CD14-positive monocyte (primary cell): ENCODE measurements at regions of chr14 and their contacts with region 1.

Region 1: DNA sequence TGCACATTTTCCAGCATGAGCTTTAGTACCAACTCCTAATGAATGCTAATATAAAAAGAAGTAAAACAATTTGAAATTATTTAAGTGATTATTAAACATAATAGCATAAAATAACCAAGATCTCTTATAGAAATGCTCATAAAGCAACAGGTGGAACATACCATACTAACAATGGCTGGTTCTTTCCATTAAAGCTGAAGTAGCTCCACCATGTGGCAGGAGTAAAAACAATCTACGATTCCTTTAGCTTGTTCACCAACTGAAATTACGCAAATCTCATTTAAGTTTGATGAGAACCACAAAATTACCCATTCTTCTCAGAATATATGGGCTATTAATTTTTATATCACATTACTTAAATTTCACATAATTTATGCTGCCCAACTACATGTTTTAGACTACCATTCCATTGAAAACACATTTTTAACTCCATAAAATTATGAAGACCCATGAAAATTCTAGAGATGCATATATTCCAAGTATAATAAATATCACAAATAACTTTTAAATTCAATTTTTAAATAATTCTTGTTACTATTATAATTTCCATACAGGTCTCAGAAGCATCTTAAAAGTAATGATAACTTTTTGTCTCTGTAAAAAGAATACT is 213.6 kb downstream of the DAD1 start:
- DNase-seq: peak in 2 of 3 donors; percentile 12 to 14
- H3K4me3 ChIP-seq: no peak overlapping the region
- H3K4me3 Mint-ChIP-seq: no peak overlapping the region
- H3K27ac ChIP-seq: no peak overlapping the region
- H3K27ac Mint-ChIP-seq: no peak overlapping the region
- H3K4me1 ChIP-seq: no peaks in the 10 kb centered on the region
- H3K4me1 Mint-ChIP-seq: no peaks in the 10 kb centered on the region
- H3K27me3 ChIP-seq: no peaks in the 10 kb centered on the region
- H3K27me3 Mint-ChIP-seq: peaks cover 0 to 8% (median 2%) of the 10 kb centered on the region in 3 donors
- CTCF ChIP-seq: peak; percentile 58

Region 2: GRCh38 chr14:21467616-21468015 is 907.8 kb before region 1 on chr14:
- intact Hi-C with region 1: no loop called
- DNase-seq: no peak
- H3K4me3 ChIP-seq: no peak overlapping the region
- H3K4me3 Mint-ChIP-seq: no peak overlapping the region
- H3K27ac ChIP-seq: no peak overlapping the region
- H3K27ac Mint-ChIP-seq: peak overlapping the region in 1 of 7 donors; percentile 77
- H3K4me1 ChIP-seq: no peaks in the 10 kb centered on the region
- H3K4me1 Mint-ChIP-seq: no peaks in the 10 kb centered on the region
- H3K27me3 ChIP-seq: no peaks in the 10 kb centered on the region
- H3K27me3 Mint-ChIP-seq: no peaks in the 10 kb centered on the region
- CTCF ChIP-seq: no peak

Region 3: DNA sequence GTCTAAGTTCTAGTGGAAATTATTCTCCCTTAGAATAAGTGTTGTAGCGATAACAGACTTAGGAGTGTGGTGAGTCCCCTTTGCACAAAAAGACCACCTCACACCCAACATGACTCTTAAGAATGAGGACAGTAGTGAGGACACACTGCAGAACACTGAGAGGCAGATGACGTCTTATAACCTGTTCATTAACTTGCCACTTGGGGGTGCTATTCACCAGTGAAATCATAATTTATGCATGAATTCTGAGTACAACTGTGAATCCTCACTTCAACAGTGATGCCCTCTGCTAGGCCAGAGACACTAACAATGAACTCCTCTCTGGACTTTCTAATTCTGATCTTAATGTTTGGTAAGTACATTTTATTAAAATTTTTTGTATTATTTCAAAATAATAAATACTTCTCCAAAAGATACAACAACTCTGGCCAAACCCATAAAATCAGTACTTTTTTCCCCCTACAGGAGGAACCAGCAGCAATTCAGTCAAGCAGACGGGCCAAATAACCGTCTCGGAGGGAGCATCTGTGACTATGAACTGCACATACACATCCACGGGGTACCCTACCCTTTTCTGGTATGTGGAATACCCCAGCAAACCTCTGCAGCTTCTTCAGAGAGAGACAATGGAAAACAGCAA is 61.1 kb before region 1 on chr14:
- intact Hi-C with region 1: loop called in 1 of 2 experiments (anchors 10 kb)
- DNase-seq: peak; percentile 26 to 50 (median 47)
- H3K4me3 ChIP-seq: no peak overlapping the region
- H3K4me3 Mint-ChIP-seq: no peak overlapping the region
- H3K27ac ChIP-seq: no peak overlapping the region
- H3K27ac Mint-ChIP-seq: no peak overlapping the region
- H3K4me1 ChIP-seq: peaks cover 6 to 7% of the 10 kb centered on the region in 2 donors
- H3K4me1 Mint-ChIP-seq: peaks cover 10% of the 10 kb centered on the region
- H3K27me3 ChIP-seq: no peaks in the 10 kb centered on the region
- H3K27me3 Mint-ChIP-seq: peaks cover 0 to 2% (median 0%) of the 10 kb centered on the region in 3 donors
- CTCF ChIP-seq: peak; percentile 86

Region 4: GRCh38 chr14:22491683-22492621 is 116.5 kb after region 1 on chr14:
- intact Hi-C with region 1: no loop called
- DNase-seq: no peak
- H3K4me3 ChIP-seq: no peak overlapping the region
- H3K4me3 Mint-ChIP-seq: no peak overlapping the region
- H3K27ac ChIP-seq: no peak overlapping the region
- H3K27ac Mint-ChIP-seq: no peak overlapping the region
- H3K4me1 ChIP-seq: no peaks in the 10 kb centered on the region
- H3K4me1 Mint-ChIP-seq: no peaks in the 10 kb centered on the region
- H3K27me3 ChIP-seq: no peaks in the 10 kb centered on the region
- H3K27me3 Mint-ChIP-seq: peaks cover 2 to 5% (median 2%) of the 10 kb centered on the region in 3 donors
- CTCF ChIP-seq: no peak